MCF 10A (cell line): ENCODE measurements at regions of chr18 and their contacts with region 1.

Region 1: GRCh38 chr18:58223717-58224424 is 179.8 kb downstream of the NEDD4L start:
- DNase-seq: peak; percentile 96
- H3K4me3 Mint-ChIP-seq: peak overlapping the region; percentile 84
- H3K27ac Mint-ChIP-seq: peak overlapping the region; percentile 98
- H3K4me1 Mint-ChIP-seq: peaks cover 27% of the 10 kb centered on the region
- H3K27me3 Mint-ChIP-seq: no peaks in the 10 kb centered on the region
- CTCF ChIP-seq: no peak

Region 2: GRCh38 chr18:58097121-58097906 is 126.6 kb before region 1 on chr18:
- CTCF ChIA-PET with region 1: no interaction called
- POLR2A ChIA-PET with region 1: no interaction called
- intact Hi-C with region 1: no loop called
- DNase-seq: no peak
- H3K4me3 Mint-ChIP-seq: no peak overlapping the region
- H3K27ac Mint-ChIP-seq: no peak overlapping the region
- H3K4me1 Mint-ChIP-seq: no peaks in the 10 kb centered on the region
- H3K27me3 Mint-ChIP-seq: no peaks in the 10 kb centered on the region
- CTCF ChIP-seq: no peak

Region 3: DNA sequence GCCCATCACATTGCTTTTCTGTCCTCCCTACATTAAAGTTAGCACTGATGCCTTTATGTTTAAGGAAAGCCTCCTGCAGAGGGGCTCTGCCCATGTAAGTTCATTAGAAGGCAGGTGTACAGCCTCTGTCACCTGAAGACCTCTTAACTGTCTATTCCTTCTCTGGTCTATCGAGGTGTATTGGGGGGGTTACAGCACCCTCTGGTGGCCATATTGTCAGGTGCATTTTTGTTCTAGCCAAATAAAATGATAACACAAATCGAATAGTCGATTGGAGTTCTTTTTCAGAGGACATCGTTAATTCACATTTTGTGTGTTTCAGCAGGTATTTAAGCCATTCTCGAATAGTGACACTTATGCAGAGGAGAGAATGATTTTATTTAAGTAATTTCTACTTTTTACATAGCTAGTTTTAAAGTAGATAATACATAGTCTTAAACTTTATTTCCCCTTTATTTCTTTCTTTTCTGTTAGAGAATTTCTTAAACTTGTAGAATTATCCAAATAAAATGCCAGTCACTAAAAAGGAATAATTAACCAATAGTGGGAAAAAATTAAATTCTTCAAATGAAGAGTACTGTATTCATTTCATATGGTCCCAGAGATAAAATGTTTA is 43.0 kb before region 1 on chr18:
- CTCF ChIA-PET with region 1: interaction called, 19 read pairs
- POLR2A ChIA-PET with region 1: interaction called, 171 read pairs
- intact Hi-C with region 1: loop called (anchors 2 kb)
- DNase-seq: peak; percentile 69
- H3K4me3 Mint-ChIP-seq: no peak overlapping the region
- H3K27ac Mint-ChIP-seq: no peak overlapping the region
- H3K4me1 Mint-ChIP-seq: peaks cover 15% of the 10 kb centered on the region
- H3K27me3 Mint-ChIP-seq: no peaks in the 10 kb centered on the region
- CTCF ChIP-seq: peak; percentile 79

Region 4: GRCh38 chr18:58202406-58202730 is 21.5 kb before region 1 on chr18:
- CTCF ChIA-PET with region 1: interaction called, 3 read pairs
- POLR2A ChIA-PET with region 1: interaction called, 43 read pairs
- intact Hi-C with region 1: no loop called
- DNase-seq: peak; percentile 55
- H3K4me3 Mint-ChIP-seq: no peak overlapping the region
- H3K27ac Mint-ChIP-seq: no peak overlapping the region
- H3K4me1 Mint-ChIP-seq: peaks cover 23% of the 10 kb centered on the region
- H3K27me3 Mint-ChIP-seq: no peaks in the 10 kb centered on the region
- CTCF ChIP-seq: no peak

Region 5: GRCh38 chr18:58288922-58289797 is 65.3 kb after region 1 on chr18:
- CTCF ChIA-PET with region 1: interaction called, 4 read pairs
- POLR2A ChIA-PET with region 1: interaction called, 166 read pairs
- intact Hi-C with region 1: no loop called
- DNase-seq: peak; percentile 80
- H3K4me3 Mint-ChIP-seq: peak overlapping the region; percentile 29
- H3K27ac Mint-ChIP-seq: peak overlapping the region; percentile 94
- H3K4me1 Mint-ChIP-seq: peaks cover 55% of the 10 kb centered on the region
- H3K27me3 Mint-ChIP-seq: no peaks in the 10 kb centered on the region
- CTCF ChIP-seq: no peak

Region 6: GRCh38 chr18:58314284-58314683 is 90.4 kb after region 1 on chr18:
- CTCF ChIA-PET with region 1: interaction called, 4 read pairs
- POLR2A ChIA-PET with region 1: interaction called, 145 read pairs
- intact Hi-C with region 1: no loop called
- DNase-seq: peak; percentile 95
- H3K4me3 Mint-ChIP-seq: no peak overlapping the region
- H3K27ac Mint-ChIP-seq: peak overlapping the region; percentile 83
- H3K4me1 Mint-ChIP-seq: peaks cover 49% of the 10 kb centered on the region
- H3K27me3 Mint-ChIP-seq: no peaks in the 10 kb centered on the region
- CTCF ChIP-seq: no peak